K562 (cell line): ENCODE measurements at regions of chr9 and their contacts with region 1.

Region 1: GRCh38 chr9:15104826-15105420 is 194.7 kb upstream of the FREM1 start:
- DNase-seq: peak; percentile 8 to 25 (median 22)
- ATAC-seq: peak; percentile 56; the same call in 1 of the 3 replicates
- H3K4me3 ChIP-seq: no peak overlapping the region
- H3K27ac ChIP-seq: no peak overlapping the region
- H3K4me1 ChIP-seq: no peaks in the 10 kb centered on the region
- H3K27me3 ChIP-seq: no peaks in the 10 kb centered on the region
- CTCF ChIP-seq: peak; percentile 50 to 58 (median 52); a peak in 4 of 6 replicates
- EP300 ChIP-seq: no peak
- POLR2A ChIP-seq: no peak
- RAD21 ChIP-seq: peak; percentile 31 to 65; a peak in 3 of 4 replicates

Region 2: GRCh38 chr9:14935106-14935751 is 169.7 kb before region 1 on chr9:
- CTCF ChIA-PET with region 1: no interaction called
- POLR2A ChIA-PET with region 1: no interaction called
- in situ Hi-C with region 1: no loop called
- intact Hi-C with region 1: no loop called
- DNase-seq: no peak
- ATAC-seq: no peak
- H3K4me3 ChIP-seq: no peak overlapping the region
- H3K27ac ChIP-seq: no peak overlapping the region
- H3K4me1 ChIP-seq: no peaks in the 10 kb centered on the region
- H3K27me3 ChIP-seq: no peaks in the 10 kb centered on the region
- CTCF ChIP-seq: no peak
- EP300 ChIP-seq: no peak
- POLR2A ChIP-seq: no peak
- RAD21 ChIP-seq: no peak

Region 3: GRCh38 chr9:15116130-15116580 is 11.2 kb after region 1 on chr9:
- CTCF ChIA-PET with region 1: no interaction called
- POLR2A ChIA-PET with region 1: no interaction called
- in situ Hi-C with region 1: no loop called
- intact Hi-C with region 1: no loop called
- DNase-seq: no peak
- ATAC-seq: no peak
- H3K4me3 ChIP-seq: no peak overlapping the region
- H3K27ac ChIP-seq: no peak overlapping the region
- H3K4me1 ChIP-seq: no peaks in the 10 kb centered on the region
- H3K27me3 ChIP-seq: no peaks in the 10 kb centered on the region
- CTCF ChIP-seq: no peak
- EP300 ChIP-seq: no peak
- POLR2A ChIP-seq: no peak
- RAD21 ChIP-seq: no peak

Region 4: DNA sequence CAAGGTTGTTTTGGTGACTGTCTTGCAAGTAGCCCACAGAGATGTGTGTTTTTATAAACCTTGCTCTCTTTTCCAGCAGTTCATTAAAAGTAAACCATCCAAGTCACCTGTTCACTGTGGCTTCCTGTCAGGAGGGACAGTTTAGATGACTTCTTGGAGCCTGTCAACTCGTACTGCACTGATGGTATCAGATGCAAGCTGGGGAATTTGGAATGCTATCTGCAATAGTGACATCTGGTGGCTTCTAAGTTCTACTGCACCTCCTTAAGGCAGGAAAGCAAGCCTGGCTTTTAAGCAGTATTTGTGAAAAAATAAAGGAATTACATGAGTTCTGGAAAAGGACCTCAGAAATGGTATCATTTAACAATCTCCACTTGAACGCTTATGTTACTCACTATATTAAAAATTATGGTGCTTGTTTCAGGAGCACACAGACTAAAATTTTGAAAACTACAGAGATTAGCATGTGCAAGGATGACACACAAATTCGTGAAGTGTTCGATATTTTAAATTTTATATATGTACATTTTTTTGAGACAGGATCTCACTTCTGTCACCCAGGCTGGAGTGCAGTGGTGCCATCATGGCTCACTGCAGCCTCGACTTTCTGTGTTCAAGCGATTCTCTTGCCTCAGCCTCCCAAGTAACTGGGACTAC is 38.1 kb after region 1 on chr9:
- CTCF ChIA-PET with region 1: interaction called, 3 read pairs
- POLR2A ChIA-PET with region 1: no interaction called
- in situ Hi-C with region 1: no loop called
- intact Hi-C with region 1: loop called (anchors 2 kb)
- DNase-seq: peak; percentile 42 to 54 (median 48)
- ATAC-seq: peak; percentile 84
- H3K4me3 ChIP-seq: no peak overlapping the region
- H3K27ac ChIP-seq: no peak overlapping the region
- H3K4me1 ChIP-seq: no peaks in the 10 kb centered on the region
- H3K27me3 ChIP-seq: no peaks in the 10 kb centered on the region
- CTCF ChIP-seq: peak; percentile 57 to 72 (median 65)
- EP300 ChIP-seq: no peak
- POLR2A ChIP-seq: no peak
- RAD21 ChIP-seq: peak; percentile 54 to 72